HepG2 (cell line): ENCODE measurements at regions of chr10 and their contacts with region 1.

Region 1: GRCh38 chr10:29386342-29386999 is 97.6 kb downstream of the LYZL1 start:
- DNase-seq: peak; percentile 44
- ATAC-seq: peak; percentile 40; the same call in 2 of the 3 replicates
- H3K4me3 ChIP-seq: peak overlapping the region in 1 of 3 experiments; percentile 34; a peak in 1 of 6 replicates
- H3K27ac ChIP-seq: no peak overlapping the region
- H3K4me1 ChIP-seq: peaks cover 43% of the 10 kb centered on the region
- H3K27me3 ChIP-seq: peaks cover 0 to 8% of the 10 kb centered on the region in 2 experiments; a peak in 2 of 5 replicates
- CTCF ChIP-seq: peak; percentile 59
- EP300 ChIP-seq: no peak
- POLR2A ChIP-seq: no peak
- RAD21 ChIP-seq: no peak

Region 2: GRCh38 chr10:29403208-29403607 is 16.7 kb after region 1 on chr10:
- CTCF ChIA-PET with region 1: no interaction called
- POLR2A ChIA-PET with region 1: no interaction called
- in situ Hi-C with region 1: no loop called
- intact Hi-C with region 1: no loop called
- DNase-seq: no peak
- ATAC-seq: no peak
- H3K4me3 ChIP-seq: no peak overlapping the region
- H3K27ac ChIP-seq: no peak overlapping the region
- H3K4me1 ChIP-seq: peaks cover 9% of the 10 kb centered on the region; the same call in 1 of the 2 replicates
- H3K27me3 ChIP-seq: no peaks in the 10 kb centered on the region
- CTCF ChIP-seq: no peak
- EP300 ChIP-seq: no peak
- POLR2A ChIP-seq: no peak
- RAD21 ChIP-seq: no peak

Region 3: DNA sequence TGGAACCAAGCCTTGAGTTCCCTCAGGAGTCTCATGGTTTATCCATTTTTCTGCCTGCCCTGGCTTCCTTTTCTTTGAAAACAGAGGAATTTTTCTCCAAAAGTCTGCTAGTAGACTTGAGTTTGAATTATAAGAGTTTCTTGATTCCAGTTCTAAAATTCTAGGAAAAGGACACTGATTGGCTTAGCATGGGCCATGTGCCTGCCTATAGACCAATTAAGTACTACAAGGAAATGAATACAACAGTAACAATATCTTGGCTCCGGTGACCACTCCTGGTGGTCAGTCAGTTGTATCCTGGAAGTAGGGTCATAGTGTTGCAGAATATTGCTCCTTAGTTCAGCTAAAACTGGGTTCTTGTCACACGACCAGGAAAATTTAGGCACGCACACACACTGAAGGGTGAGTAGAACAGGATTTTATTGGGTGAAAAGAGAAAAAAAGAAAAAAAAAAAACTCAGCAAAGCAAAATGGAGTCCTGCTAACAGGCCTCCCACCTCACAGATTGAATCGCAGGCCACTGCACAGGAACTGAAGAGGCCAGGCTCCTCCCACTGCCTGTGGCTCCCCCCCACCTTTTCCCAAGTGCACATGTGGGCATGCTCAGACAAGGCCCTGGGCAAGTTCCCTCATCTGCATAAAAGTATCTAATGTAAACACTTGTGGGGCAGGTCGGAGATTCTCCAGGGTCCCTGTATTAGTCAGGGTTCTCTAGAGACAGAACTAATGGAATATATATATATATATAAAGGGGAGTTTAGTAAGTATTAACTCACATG is 57.5 kb after region 1 on chr10:
- CTCF ChIA-PET with region 1: interaction called, 3 read pairs
- POLR2A ChIA-PET with region 1: no interaction called
- in situ Hi-C with region 1: loop called (anchors 5 kb)
- intact Hi-C with region 1: loop called (anchors 1 kb)
- DNase-seq: peak; percentile 50
- ATAC-seq: peak; percentile 77
- H3K4me3 ChIP-seq: no peak overlapping the region
- H3K27ac ChIP-seq: peak overlapping the region; percentile 58
- H3K4me1 ChIP-seq: peaks cover 31% of the 10 kb centered on the region
- H3K27me3 ChIP-seq: no peaks in the 10 kb centered on the region
- CTCF ChIP-seq: no peak
- EP300 ChIP-seq: no peak
- POLR2A ChIP-seq: no peak
- RAD21 ChIP-seq: no peak